ENCODE measurements at regions of chr6 and their contacts with region 1.

Region 1: DNA sequence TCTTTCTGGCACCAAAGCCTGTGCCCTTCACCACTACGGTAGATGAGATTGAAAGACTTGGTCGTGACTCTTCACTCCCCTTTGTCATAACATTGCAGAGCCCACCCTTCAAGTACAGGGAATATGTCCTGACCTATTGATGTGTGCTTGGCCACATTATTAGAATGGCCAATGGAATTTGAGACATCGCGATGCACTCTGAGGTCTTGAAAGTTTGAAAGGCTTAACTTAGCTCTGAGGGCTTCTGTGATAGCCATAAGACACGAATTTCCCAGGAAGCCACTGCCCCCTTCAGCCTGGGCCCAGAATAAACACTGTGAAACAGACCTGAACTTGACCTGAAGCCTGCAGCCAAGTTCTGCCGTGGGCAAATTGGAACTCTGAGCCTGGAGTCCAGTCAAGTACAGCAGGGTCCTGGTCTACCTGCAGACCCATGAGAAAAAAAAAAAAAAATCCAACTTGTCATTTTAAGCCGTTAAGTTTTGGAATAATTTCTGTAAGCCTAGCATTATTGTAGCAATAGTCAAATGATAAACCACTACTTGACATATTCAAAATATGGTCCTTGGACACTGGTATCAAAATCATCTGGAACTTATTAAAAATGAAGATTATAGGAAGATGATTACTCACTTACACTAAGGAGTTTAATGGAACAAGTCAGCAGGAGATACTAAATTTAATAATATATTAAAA is 36.9 kb upstream of the TRAF3IP2 start:
- DNase-seq: no peak
- H3K4me3 ChIP-seq: no peak overlapping the region
- CTCF ChIP-seq: peak; percentile 71

Region 2: DNA sequence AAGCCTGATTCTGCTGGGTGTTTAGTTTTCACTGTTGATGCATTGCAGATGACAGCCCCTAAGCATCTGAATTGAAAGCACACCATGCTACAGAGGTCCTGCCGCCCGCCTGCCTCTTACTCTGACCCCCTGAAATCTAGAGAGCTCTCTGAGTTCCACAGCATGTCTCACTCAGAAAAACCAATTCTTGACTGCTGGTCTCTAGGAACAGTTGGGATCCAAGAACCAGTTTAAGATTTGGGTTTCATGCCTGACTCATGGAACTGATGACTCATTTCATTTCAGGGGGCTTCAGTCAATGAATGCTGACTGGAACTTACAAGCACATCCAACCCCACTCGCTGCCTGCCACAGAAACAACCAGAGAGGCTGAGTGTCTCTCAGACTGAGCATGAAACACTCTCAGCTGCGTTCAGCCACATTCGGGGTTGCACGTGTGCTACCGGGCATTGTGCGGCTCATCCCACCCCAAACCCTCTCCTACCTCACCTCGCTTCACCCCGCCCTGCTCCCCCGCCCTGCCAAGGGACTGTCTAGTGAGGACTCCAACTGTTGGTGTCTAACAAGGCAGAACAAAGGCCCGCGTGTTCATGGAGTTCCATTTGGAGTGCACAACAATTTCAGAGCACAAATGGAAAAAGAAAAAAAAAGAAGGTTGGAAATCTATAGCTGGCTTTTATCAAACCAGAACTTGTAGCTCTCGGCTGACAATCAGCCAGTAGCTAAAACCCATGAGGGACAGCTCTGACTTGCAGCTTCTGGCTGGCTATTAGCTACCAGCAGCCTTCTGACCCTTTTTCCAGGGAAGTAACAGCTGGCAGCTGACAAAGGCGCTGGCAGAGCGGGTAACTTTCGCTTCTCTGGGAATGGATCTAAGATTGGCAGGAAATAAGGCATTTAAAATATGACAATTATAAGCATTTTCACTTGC is 16.9 kb before region 1 on chr6:
- CTCF ChIA-PET with region 1: interaction called, 29 read pairs
- POLR2A ChIA-PET with region 1: interaction called, 3 read pairs
- DNase-seq: no peak
- H3K4me3 ChIP-seq: peak overlapping the region; percentile 26
- CTCF ChIP-seq: no peak

Region 3: DNA sequence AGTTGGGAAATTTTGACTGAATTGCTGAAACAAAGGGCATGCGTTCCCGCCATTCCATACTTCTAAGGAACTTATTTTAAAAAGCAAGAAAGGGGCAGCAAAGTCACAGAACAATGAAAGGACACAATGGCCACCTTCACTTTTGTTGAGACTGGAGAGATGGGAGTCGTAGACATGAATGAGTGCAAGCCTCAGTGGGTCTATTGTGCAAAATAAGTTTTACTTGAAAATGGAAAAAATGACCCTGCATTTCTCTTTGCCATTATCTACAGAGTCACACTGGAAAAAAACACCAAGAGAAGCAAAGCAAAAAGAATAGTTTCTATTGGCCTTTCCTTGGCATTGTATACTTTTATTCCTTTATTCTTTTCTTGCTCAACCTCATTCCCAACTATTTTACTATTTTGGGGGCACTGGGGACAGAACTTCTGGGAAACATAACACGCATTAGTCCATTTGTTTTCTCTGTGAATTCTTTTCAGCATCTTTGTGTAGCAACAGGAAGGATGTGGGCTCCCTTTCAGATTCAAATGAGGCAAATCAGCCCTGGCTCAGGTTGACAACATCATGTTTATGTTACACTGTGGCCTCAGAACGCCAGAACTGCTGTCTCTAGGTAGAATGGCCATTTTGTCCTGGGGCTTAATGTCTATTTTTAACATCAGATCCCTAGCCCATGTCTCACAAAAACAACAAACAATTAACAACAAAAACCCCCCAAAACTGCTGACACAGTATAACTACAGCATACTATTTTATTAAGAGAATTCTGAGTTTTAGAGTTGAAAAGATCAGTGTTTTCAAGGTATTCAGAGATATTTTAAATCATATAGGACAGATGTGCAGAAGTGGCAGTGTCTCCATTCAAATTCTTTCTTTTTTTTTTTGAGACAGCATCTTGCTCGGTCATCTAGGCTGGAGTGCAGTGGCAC is 108.4 kb after region 1 on chr6:
- CTCF ChIA-PET with region 1: no interaction called
- POLR2A ChIA-PET with region 1: no interaction called
- DNase-seq: no peak
- H3K4me3 ChIP-seq: no peak overlapping the region
- CTCF ChIP-seq: no peak